CD4-positive, alpha-beta memory T cell (primary cell): ENCODE measurements at regions of chr16 and their contacts with region 1.

Region 1: DNA sequence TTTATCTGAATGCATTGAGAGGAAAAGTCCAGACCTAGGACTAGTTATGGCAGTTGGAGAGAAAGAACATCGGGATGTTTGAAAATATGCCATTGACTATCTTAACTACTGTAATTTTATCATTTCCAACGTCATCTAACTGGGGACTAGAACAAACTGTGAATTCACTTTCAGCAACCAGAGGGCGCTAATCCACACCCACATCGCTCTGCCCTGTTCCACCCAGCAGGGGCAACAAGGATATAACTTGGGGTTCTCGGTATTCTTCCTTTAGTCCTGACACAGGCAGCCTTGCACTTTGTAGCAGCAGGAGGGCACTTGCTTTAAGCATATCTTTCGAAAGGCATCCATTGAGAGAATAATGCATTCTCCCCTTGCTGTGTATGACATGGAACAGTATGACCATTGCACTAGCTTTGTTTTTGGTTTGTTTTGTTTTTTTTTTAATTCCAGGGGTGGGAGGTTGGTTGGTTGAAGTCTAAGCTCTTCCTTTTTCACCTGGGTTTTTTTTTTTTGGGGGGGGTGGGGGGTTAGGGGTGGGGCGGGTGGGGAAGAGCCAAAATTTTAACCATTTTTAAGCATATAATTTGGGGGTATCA is 31.5 kb downstream of the SIAH1 start:
- DNase-seq: peak; percentile 71 to 81 (median 73)
- H3K4me3 ChIP-seq: no peak overlapping the region
- H3K4me3 Mint-ChIP-seq: no peak overlapping the region
- H3K27ac ChIP-seq: no peak overlapping the region
- H3K27ac Mint-ChIP-seq: peak overlapping the region in 6 of 7 donors; percentile 1 to 86 (median 60)
- H3K4me1 ChIP-seq: peaks cover 3% of the 10 kb centered on the region
- H3K4me1 Mint-ChIP-seq: peaks cover 5 to 22% (median 7%) of the 10 kb centered on the region in 4 donors
- H3K27me3 ChIP-seq: no peaks in the 10 kb centered on the region
- H3K27me3 Mint-ChIP-seq: no peaks in the 10 kb centered on the region

Region 2: GRCh38 chr16:48194828-48195556 is 158.7 kb before region 1 on chr16:
- CTCF ChIA-PET with region 1: no interaction called
- POLR2A ChIA-PET with region 1: no interaction called
- intact Hi-C with region 1: no loop called
- DNase-seq: no peak
- H3K4me3 ChIP-seq: no peak overlapping the region
- H3K4me3 Mint-ChIP-seq: no peak overlapping the region
- H3K27ac ChIP-seq: no peak overlapping the region
- H3K27ac Mint-ChIP-seq: no peak overlapping the region
- H3K4me1 ChIP-seq: no peaks in the 10 kb centered on the region
- H3K4me1 Mint-ChIP-seq: peaks cover 0 to 2% (median 1%) of the 10 kb centered on the region in 4 donors
- H3K27me3 ChIP-seq: no peaks in the 10 kb centered on the region
- H3K27me3 Mint-ChIP-seq: peaks cover 0 to 4% of the 10 kb centered on the region in 2 donors

Region 3: GRCh38 chr16:48365581-48366164 is 12.0 kb after region 1 on chr16:
- CTCF ChIA-PET with region 1: interaction called, 47 read pairs
- POLR2A ChIA-PET with region 1: interaction called, 10 read pairs
- intact Hi-C with region 1: loop called (anchors 1 kb)
- DNase-seq: peak; percentile 73 to 78 (median 75)
- H3K4me3 ChIP-seq: peak overlapping the region; percentile 82 to 86
- H3K4me3 Mint-ChIP-seq: peak overlapping the region; percentile 85 to 97 (median 94)
- H3K27ac ChIP-seq: peak overlapping the region; percentile 76
- H3K27ac Mint-ChIP-seq: peak overlapping the region; percentile 88 to 99 (median 98)
- H3K4me1 ChIP-seq: peaks cover 22% of the 10 kb centered on the region
- H3K4me1 Mint-ChIP-seq: peaks cover 23 to 34% (median 31%) of the 10 kb centered on the region in 4 donors
- H3K27me3 ChIP-seq: no peaks in the 10 kb centered on the region
- H3K27me3 Mint-ChIP-seq: no peaks in the 10 kb centered on the region

Region 4: DNA sequence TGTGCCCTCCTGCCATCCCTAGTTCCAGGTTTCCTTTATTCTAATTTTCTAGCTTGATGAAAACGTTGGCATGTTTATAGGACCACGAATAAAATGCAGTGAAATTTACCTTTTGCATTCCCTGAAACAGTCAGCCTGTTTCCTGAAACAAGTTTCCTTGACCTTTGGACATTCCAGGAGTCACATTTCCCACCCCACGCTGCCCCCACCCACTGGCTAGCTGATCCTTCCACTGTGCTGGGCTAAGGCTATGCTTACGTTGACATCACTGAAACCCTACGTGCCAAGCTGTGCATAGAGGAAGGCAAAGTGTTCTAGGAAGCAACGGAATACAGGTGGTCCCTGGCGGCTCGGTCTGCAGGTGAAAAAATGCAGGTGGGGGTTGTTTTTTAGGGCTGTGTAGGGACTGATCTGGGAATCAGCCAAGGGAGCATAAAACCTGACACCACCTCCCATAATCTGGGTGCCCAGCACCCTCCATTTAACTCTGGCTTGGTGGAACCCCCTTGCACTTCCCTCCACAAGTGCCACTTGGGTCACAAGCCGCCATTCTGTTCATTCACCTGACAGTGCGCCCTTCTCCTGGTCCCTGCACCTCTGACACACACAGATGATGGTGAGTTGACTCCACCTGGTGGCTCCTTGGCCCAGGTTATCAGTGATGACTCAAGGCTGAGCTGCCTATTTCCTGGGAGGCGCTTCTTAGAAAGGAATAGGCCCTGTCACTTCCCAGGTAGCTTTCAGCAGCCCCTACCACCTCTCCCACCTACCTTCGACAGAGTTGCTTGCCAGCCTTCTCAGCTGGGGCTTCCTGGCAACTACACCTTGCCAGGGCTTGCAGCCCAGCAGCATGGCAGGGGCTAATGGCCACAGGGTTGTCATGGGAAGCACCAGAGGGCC is 172.6 kb after region 1 on chr16:
- CTCF ChIA-PET with region 1: interaction called, 3 read pairs
- POLR2A ChIA-PET with region 1: no interaction called
- intact Hi-C with region 1: loop called (anchors 5 kb)
- DNase-seq: no peak
- H3K4me3 ChIP-seq: no peak overlapping the region
- H3K4me3 Mint-ChIP-seq: no peak overlapping the region
- H3K27ac ChIP-seq: no peak overlapping the region
- H3K27ac Mint-ChIP-seq: no peak overlapping the region
- H3K4me1 ChIP-seq: no peaks in the 10 kb centered on the region
- H3K4me1 Mint-ChIP-seq: no peaks in the 10 kb centered on the region
- H3K27me3 ChIP-seq: no peaks in the 10 kb centered on the region
- H3K27me3 Mint-ChIP-seq: no peaks in the 10 kb centered on the region